Activated CD4-positive, alpha-beta T cell treated with anti-CD3 and anti-CD28 coated beads for 36 hours (primary cell): ENCODE measurements at regions of chr2 and their contacts with region 1.

Region 1: GRCh38 chr2:67397143-67397986 is at the start of gene ETAA1:
- DNase-seq: peak; percentile 96
- ATAC-seq: peak; percentile 100
- H3K4me3 Mint-ChIP-seq: peak within 1 kb of the TSS; percentile 98
- H3K27ac Mint-ChIP-seq: peak within 1 kb of the TSS; percentile 99
- H3K4me1 Mint-ChIP-seq: peaks cover 12% of the 10 kb centered on the region
- H3K27me3 Mint-ChIP-seq: no peaks in the 10 kb centered on the region
- total RNA-seq, gene ETAA1: 13.7 to 17.1 TPM

Region 2: GRCh38 chr2:67311536-67311935 is 85.8 kb before region 1 on chr2:
- CTCF ChIA-PET with region 1: no interaction called
- POLR2A ChIA-PET with region 1: no interaction called
- intact Hi-C with region 1: no loop called
- DNase-seq: no peak
- ATAC-seq: no peak
- H3K4me3 Mint-ChIP-seq: no peak overlapping the region
- H3K27ac Mint-ChIP-seq: no peak overlapping the region
- H3K4me1 Mint-ChIP-seq: no peaks in the 10 kb centered on the region
- H3K27me3 Mint-ChIP-seq: peaks cover 4% of the 10 kb centered on the region

Region 3: GRCh38 chr2:68062680-68063387 is 665.5 kb after region 1 on chr2 and contains the start of gene C1D:
- CTCF ChIA-PET with region 1: no interaction called
- POLR2A ChIA-PET with region 1: no interaction called
- intact Hi-C with region 1: loop called in 1 of 2 experiments (anchors 1 kb)
- DNase-seq: peak; percentile 96
- ATAC-seq: peak; percentile 92
- H3K4me3 Mint-ChIP-seq: peak within 1 kb of the TSS; percentile 89
- H3K27ac Mint-ChIP-seq: peak within 1 kb of the TSS; percentile 95
- H3K4me1 Mint-ChIP-seq: peaks cover 28% of the 10 kb centered on the region
- H3K27me3 Mint-ChIP-seq: no peaks in the 10 kb centered on the region
- total RNA-seq, gene C1D: 11.3 to 21.4 TPM